Common myeloid progenitor, CD34-positive (primary cell): ENCODE measurements at regions of chr14 and their contacts with region 1.

Region 1: GRCh38 chr14:50038398-50039119 is 77.8 kb downstream of the VCPKMT start:
- DNase-seq: peak; percentile 77 to 96 (median 95)
- H3K4me3 ChIP-seq: no peak overlapping the region
- H3K27ac ChIP-seq: no peak overlapping the region
- H3K4me1 ChIP-seq: peaks cover 6 to 41% (median 38%) of the 10 kb centered on the region in 4 experiments
- H3K27me3 ChIP-seq: no peaks in the 10 kb centered on the region

Region 2: GRCh38 chr14:50000217-50001150 is 38.1 kb before region 1 on chr14:
- CTCF ChIA-PET with region 1: interaction called, 12 read pairs
- POLR2A ChIA-PET with region 1: no interaction called
- DNase-seq: peak; percentile 56 to 86 (median 82)
- H3K4me3 ChIP-seq: peak overlapping the region in 2 of 7 experiments; percentile 1 to 35
- H3K27ac ChIP-seq: peak overlapping the region in 1 of 2 experiments; percentile 70
- H3K4me1 ChIP-seq: peaks cover 23 to 71% (median 57%) of the 10 kb centered on the region in 4 experiments
- H3K27me3 ChIP-seq: no peaks in the 10 kb centered on the region

Region 3: GRCh38 chr14:50099335-50099734 is 60.8 kb after region 1 on chr14:
- CTCF ChIA-PET with region 1: no interaction called
- POLR2A ChIA-PET with region 1: no interaction called
- DNase-seq: no peak
- H3K4me3 ChIP-seq: no peak overlapping the region
- H3K27ac ChIP-seq: no peak overlapping the region
- H3K4me1 ChIP-seq: peaks cover 2 to 11% (median 6%) of the 10 kb centered on the region in 4 experiments
- H3K27me3 ChIP-seq: no peaks in the 10 kb centered on the region